ENCODE measurements at regions of chr2 and their contacts with region 1.

Region 1: DNA sequence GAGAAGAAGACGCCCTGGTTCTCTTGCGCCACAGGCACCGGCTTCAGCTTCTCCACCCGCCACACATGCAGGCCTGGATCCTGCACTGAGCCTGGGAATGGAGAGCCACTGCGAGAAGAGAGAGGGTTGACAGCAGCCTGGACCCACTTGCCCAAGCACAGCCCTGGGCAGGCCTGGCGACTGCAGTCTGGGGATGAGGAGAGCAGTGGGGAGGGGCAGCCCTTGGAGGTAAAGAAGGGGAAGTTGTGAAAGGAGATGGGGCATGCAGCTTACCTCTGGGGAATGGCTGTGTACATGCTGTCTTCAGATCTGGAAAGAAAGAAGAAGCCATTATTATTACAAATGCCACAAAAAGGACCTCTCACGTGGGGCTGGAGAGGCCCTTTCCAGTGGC is 8.3 kb downstream of the CAPG start:
- DNase-seq: peak in 1 of 4 donors; percentile 8
- ATAC-seq: no peak
- H3K4me3 ChIP-seq: no peak overlapping the region
- H3K27ac ChIP-seq: no peak overlapping the region
- H3K4me1 ChIP-seq: peaks cover 7% of the 10 kb centered on the region
- H3K27me3 ChIP-seq: no peaks in the 10 kb centered on the region
- CTCF ChIP-seq: no peak
- POLR2A ChIP-seq: no peak

Region 2: DNA sequence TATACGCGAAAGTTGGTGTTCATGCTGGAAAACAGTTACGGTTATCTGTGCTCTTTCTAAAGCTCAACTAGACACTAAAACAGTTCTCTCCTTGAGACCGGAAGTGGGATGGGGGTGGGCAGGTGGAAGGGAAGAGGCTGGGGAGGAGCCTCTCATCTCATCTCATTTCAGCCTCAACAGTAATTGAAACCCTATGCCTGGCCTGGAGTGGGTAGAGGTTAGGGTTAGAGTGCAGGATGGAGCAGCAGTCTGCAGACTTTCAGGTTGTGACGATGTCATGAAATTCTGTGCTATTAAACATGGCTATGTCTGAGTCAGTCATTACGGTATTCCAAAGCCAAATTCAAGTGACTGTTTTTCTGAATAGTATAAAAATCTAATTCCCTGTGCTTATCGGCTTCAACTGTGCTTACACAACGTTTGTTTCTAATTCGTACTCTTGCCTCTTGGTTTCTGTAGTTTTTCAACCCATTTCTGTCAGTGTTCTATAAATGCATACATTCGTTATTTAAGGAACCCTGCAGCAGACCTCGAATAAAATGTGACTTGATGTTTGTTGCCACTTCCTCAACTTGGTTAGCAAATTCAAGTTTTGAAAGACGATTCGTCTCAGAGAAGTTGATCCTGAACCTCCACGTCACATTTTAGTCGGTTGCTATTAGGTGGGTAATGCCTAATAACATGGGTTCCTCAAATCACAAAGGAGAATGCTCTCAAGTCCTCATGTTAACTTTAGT is 344.5 kb before region 1 on chr2:
- intact Hi-C with region 1: no loop called
- DNase-seq: no peak
- ATAC-seq: no peak
- H3K4me3 ChIP-seq: no peak overlapping the region
- H3K27ac ChIP-seq: no peak overlapping the region
- H3K4me1 ChIP-seq: peaks cover 7% of the 10 kb centered on the region
- H3K27me3 ChIP-seq: no peaks in the 10 kb centered on the region
- CTCF ChIP-seq: no peak
- POLR2A ChIP-seq: no peak

Region 3: GRCh38 chr2:85369500-85369899 is 32.3 kb before region 1 on chr2:
- intact Hi-C with region 1: loop called (anchors 5 kb)
- DNase-seq: no peak
- ATAC-seq: no peak
- H3K4me3 ChIP-seq: no peak overlapping the region
- H3K27ac ChIP-seq: no peak overlapping the region
- H3K4me1 ChIP-seq: no peaks in the 10 kb centered on the region
- H3K27me3 ChIP-seq: no peaks in the 10 kb centered on the region
- CTCF ChIP-seq: no peak
- POLR2A ChIP-seq: no peak

Measured in body of pancreas (tissue), 4 donors.